ENCODE measurements at regions of chr17 and their contacts with region 1.

Region 1: DNA sequence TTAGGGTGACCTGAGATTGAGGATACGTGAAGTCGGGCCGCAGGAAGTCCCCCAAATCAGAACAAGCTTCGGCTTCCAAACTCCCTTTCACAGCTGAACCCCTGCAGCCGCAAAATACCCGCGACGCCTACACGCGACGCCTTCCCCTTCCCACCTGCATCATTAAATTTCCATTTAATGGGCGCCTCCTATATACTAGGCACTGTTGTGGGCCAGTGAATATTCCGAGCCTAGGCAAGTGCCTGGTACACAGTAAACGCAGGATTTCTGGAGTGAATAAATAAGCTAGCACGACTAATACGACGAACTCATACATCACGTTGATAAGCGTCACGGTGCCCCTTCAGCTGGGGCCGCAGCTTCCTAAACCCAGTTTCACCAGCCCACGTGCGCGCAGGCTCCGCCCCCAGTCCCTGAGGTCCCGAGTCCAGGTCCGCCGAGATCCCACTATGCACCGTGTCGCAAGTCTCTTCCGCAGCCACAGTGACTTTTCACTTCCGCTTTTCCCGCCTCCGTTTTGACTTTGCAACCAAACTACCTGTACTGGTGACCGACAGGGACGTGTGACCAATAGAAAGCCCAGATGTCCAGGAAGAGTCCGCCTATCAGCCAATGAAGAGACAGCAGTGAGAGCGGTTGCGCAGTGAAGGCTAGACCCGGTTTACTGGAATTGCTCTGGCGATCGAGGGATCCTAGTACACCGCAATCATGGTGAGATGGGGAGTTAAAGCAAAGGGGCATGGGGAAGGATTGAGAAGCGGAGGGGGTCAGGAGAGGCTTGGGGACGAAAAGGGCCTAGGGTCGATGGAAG is at the start of gene PSMB3:
- H3K4me3 Mint-ChIP-seq: peak within 1 kb of the TSS; percentile 97
- H3K27ac Mint-ChIP-seq: peak within 1 kb of the TSS; percentile 95
- H3K4me1 Mint-ChIP-seq: peaks cover 55% of the 10 kb centered on the region
- H3K27me3 Mint-ChIP-seq: peaks cover 37% of the 10 kb centered on the region

Region 2: GRCh38 chr17:38729886-38730525 is 22.3 kb before region 1 on chr17 and contains the start of gene CISD3:
- intact Hi-C with region 1: loop called (anchors 1 kb)
- H3K4me3 Mint-ChIP-seq: peak within 1 kb of the TSS; percentile 90
- H3K27ac Mint-ChIP-seq: peak within 1 kb of the TSS; percentile 89
- H3K4me1 Mint-ChIP-seq: peaks cover 86% of the 10 kb centered on the region
- H3K27me3 Mint-ChIP-seq: no peaks in the 10 kb centered on the region

Region 3: DNA sequence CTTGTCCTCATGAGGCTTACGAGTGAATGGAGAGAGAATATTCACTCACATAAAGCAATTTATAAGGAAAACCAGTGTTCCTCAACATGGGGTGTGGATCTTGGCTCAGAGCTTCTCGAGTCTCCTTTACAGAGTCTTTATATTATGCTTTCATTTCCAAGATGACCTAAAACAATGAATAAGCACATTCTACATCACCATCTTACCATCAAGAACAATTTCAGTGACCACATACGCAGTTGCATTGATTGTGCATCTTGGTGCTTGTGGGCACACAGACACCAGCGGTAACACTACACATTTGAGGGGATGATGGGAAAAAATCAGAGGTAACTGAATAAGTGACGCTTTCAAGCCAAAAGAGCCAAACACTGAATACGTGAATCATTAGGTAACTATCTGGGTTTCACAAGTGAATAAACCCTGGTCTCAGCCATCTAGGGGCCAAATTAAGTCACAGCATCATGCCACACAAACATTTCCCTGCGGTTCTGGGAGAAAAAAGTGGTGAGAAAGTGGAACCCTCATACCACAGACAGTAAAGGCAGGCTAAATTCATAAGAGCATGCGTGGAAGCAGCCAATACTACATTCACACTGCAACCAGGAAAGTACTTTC is 63.4 kb after region 1 on chr17:
- intact Hi-C with region 1: no loop called
- H3K4me3 Mint-ChIP-seq: no peak overlapping the region
- H3K27ac Mint-ChIP-seq: no peak overlapping the region
- H3K4me1 Mint-ChIP-seq: no peaks in the 10 kb centered on the region
- H3K27me3 Mint-ChIP-seq: no peaks in the 10 kb centered on the region

Region 4: GRCh38 chr17:38868817-38869525 is 116.6 kb after region 1 on chr17:
- intact Hi-C with region 1: loop called (anchors 5 kb)
- H3K4me3 Mint-ChIP-seq: peak overlapping the region; percentile 100
- H3K27ac Mint-ChIP-seq: peak overlapping the region; percentile 97
- H3K4me1 Mint-ChIP-seq: peaks cover 50% of the 10 kb centered on the region
- H3K27me3 Mint-ChIP-seq: peaks cover 3% of the 10 kb centered on the region